HCT116 (cell line): ENCODE measurements at regions of chr1 and their contacts with region 1.

Region 1: GRCh38 chr1:8077120-8077573 is 51.0 kb upstream of the ERRFI1 start:
- DNase-seq: peak; percentile 88
- ATAC-seq: peak; percentile 78
- H3K4me3 ChIP-seq: peak overlapping the region in 1 of 2 experiments; percentile 48; a peak in 2 of 4 replicates
- H3K27ac ChIP-seq: peak overlapping the region; percentile 92
- H3K4me1 ChIP-seq: peaks cover 92 to 99% of the 10 kb centered on the region in 2 experiments
- H3K27me3 ChIP-seq: no peaks in the 10 kb centered on the region
- CTCF ChIP-seq: no peak
- POLR2A ChIP-seq: peak; percentile 37
- RAD21 ChIP-seq: no peak

Region 2: GRCh38 chr1:8032366-8032910 is 44.7 kb before region 1 on chr1:
- CTCF ChIA-PET with region 1: interaction called, 7 read pairs
- POLR2A ChIA-PET with region 1: interaction called, 80 read pairs
- RAD21 ChIA-PET with region 1: interaction called in 1 of 2 experiments, 9 read pairs
- intact Hi-C with region 1: loop called (anchors 5 kb)
- DNase-seq: no peak
- ATAC-seq: no peak
- H3K4me3 ChIP-seq: no peak overlapping the region
- H3K27ac ChIP-seq: peak overlapping the region; percentile 14
- H3K4me1 ChIP-seq: peaks cover 59 to 83% of the 10 kb centered on the region in 2 experiments
- H3K27me3 ChIP-seq: no peaks in the 10 kb centered on the region
- CTCF ChIP-seq: no peak
- POLR2A ChIP-seq: no peak
- RAD21 ChIP-seq: no peak

Region 3: GRCh38 chr1:8061210-8061609 is 15.9 kb before region 1 on chr1:
- CTCF ChIA-PET with region 1: no interaction called
- POLR2A ChIA-PET with region 1: interaction called, 32 read pairs
- RAD21 ChIA-PET with region 1: interaction called in 1 of 2 experiments, 5 read pairs
- intact Hi-C with region 1: no loop called
- DNase-seq: peak; percentile 60
- ATAC-seq: peak; percentile 64
- H3K4me3 ChIP-seq: peak overlapping the region in 1 of 2 experiments; percentile 24; a peak in 2 of 4 replicates
- H3K27ac ChIP-seq: peak overlapping the region; percentile 87
- H3K4me1 ChIP-seq: peaks cover 82 to 85% of the 10 kb centered on the region in 2 experiments
- H3K27me3 ChIP-seq: no peaks in the 10 kb centered on the region
- CTCF ChIP-seq: no peak
- POLR2A ChIP-seq: no peak
- RAD21 ChIP-seq: no peak

Region 4: GRCh38 chr1:8121261-8122170 is 44.4 kb after region 1 on chr1:
- CTCF ChIA-PET with region 1: no interaction called
- POLR2A ChIA-PET with region 1: interaction called, 22 read pairs
- RAD21 ChIA-PET with region 1: interaction called, 3 to 4 read pairs
- intact Hi-C with region 1: no loop called
- DNase-seq: peak; percentile 95
- ATAC-seq: peak; percentile 65
- H3K4me3 ChIP-seq: peak overlapping the region in 1 of 2 experiments; percentile 15; a peak in 1 of 4 replicates
- H3K27ac ChIP-seq: peak overlapping the region; percentile 99
- H3K4me1 ChIP-seq: peaks cover 72 to 83% of the 10 kb centered on the region in 2 experiments
- H3K27me3 ChIP-seq: no peaks in the 10 kb centered on the region
- CTCF ChIP-seq: no peak
- POLR2A ChIP-seq: no peak
- RAD21 ChIP-seq: no peak

Region 5: DNA sequence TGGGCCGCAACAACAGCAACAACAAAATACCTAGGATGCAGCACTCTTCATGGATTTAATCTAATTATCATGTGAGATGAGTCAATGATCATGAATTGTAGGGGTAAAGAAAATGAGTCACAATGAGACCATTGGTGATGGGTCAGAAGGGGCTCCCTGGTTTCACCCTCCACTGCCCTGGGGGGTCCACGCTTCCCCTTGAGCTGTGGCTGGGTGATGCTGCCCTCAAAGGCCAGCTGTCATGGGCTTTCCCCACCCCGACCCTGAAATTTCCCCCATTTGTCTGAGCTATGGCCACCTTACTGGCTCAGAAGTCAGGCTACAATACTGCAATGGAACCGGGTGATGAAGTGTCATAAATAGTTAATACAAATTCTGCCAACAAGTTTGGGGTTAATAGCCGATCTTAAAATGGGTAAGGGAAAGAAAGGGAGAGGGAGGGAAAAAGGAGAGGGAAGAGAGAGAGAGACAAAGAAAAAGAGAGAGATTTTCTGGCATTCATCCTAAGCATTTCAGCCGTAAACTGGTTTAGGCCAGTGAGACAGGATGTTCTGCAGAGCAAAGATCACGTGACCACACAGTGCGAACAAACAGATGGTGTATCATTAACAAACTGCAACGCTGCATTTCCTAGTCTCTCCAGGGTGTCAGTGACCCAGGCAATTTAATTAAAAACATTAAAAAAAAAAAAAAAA is 92.4 kb after region 1 on chr1:
- CTCF ChIA-PET with region 1: no interaction called
- POLR2A ChIA-PET with region 1: interaction called, 18 read pairs
- RAD21 ChIA-PET with region 1: interaction called in 1 of 2 experiments, 5 read pairs
- intact Hi-C with region 1: no loop called
- DNase-seq: no peak
- ATAC-seq: peak; percentile 26; the same call in 1 of the 2 replicates
- H3K4me3 ChIP-seq: no peak overlapping the region
- H3K27ac ChIP-seq: peak overlapping the region; percentile 96
- H3K4me1 ChIP-seq: peaks cover 71 to 94% of the 10 kb centered on the region in 2 experiments
- H3K27me3 ChIP-seq: no peaks in the 10 kb centered on the region
- CTCF ChIP-seq: no peak
- POLR2A ChIP-seq: peak; percentile 26
- RAD21 ChIP-seq: no peak